Right cardiac atrium (tissue), 5 donors: ENCODE measurements at regions of chr7 and their contacts with region 1.

Region 1: DNA sequence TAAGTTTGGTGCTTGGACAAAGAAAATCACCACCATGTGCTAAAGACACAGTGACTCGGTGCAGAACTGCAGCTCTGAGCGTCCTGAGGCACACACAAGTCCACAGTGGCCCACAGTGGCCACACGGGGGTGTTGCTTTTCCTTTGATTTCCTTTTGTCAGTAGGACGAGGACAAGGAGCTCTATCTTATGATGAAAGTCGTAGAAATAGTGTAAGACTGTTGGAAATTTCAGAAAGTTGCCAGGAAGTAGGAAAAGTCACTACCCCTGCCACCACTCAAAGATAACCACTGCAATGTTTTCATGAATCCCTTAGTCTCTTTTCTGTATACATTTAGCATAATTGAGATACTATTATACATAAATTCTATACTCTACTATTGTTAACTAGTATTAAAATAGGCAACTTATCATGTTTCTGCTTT is 146.0 kb downstream of the TNS3 start:
- DNase-seq: peak; percentile 75 to 90 (median 81)
- ATAC-seq: peak; percentile 88 to 90
- H3K4me3 ChIP-seq: no peak overlapping the region
- H3K27ac ChIP-seq: no peak overlapping the region
- H3K4me1 ChIP-seq: no peaks in the 10 kb centered on the region
- H3K27me3 ChIP-seq: no peaks in the 10 kb centered on the region

Region 2: GRCh38 chr7:47266131-47266706 is 169.7 kb before region 1 on chr7:
- intact Hi-C with region 1: loop called in 2 of 4 experiments (anchors 5 kb)
- DNase-seq: peak; percentile 41 to 81 (median 71)
- ATAC-seq: peak; percentile 78 to 87
- H3K4me3 ChIP-seq: no peak overlapping the region
- H3K27ac ChIP-seq: peak overlapping the region; percentile 36
- H3K4me1 ChIP-seq: peaks cover 5% of the 10 kb centered on the region
- H3K27me3 ChIP-seq: no peaks in the 10 kb centered on the region

Region 3: GRCh38 chr7:47571331-47572093 is 135.6 kb after region 1 on chr7:
- intact Hi-C with region 1: loop called in 1 of 4 experiments (anchors 10 kb)
- DNase-seq: peak; percentile 89 to 95 (median 95)
- ATAC-seq: peak; percentile 82 to 83
- H3K4me3 ChIP-seq: no peak overlapping the region
- H3K27ac ChIP-seq: peak overlapping the region; percentile 90
- H3K4me1 ChIP-seq: peaks cover 20% of the 10 kb centered on the region
- H3K27me3 ChIP-seq: no peaks in the 10 kb centered on the region

Region 4: DNA sequence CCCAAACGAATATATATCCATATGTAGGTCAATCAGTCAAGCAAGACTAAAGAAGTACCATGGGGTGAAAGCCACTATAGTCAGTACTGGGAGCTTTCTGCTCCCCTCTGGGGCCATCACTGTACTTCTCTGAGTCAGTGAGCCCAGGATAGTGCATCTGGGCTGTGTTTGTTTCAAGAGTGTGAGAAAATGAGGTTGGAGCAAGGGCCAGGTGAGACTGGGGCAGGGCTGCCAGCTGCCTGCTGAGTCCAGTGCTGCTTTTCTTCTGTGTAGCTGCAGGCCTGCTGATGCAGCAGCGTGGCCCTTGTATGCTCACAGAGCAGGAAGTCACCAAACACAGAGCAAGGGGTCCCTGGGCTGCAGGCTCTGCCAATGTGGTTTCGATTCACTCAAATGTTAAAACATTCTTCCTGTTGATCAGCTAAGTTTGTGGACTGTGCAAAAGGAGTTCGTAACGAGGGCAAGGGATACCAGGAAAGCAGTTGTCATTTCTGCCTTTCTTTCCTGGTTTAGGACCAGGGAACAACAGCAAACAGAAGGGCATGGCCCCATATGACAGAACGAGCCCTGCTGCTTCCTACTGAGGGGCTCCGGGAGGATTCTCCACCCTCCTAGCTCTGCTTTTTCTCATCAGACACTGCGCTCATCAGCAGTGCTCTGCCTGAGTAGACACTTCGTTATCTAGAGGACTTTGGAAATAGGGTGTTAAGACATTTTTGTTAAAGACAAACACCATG is 211.4 kb after region 1 on chr7:
- intact Hi-C with region 1: no loop called
- DNase-seq: no peak
- ATAC-seq: peak; percentile 21 to 33
- H3K4me3 ChIP-seq: no peak overlapping the region
- H3K27ac ChIP-seq: no peak overlapping the region
- H3K4me1 ChIP-seq: peaks cover 3% of the 10 kb centered on the region
- H3K27me3 ChIP-seq: no peaks in the 10 kb centered on the region

Region 5: DNA sequence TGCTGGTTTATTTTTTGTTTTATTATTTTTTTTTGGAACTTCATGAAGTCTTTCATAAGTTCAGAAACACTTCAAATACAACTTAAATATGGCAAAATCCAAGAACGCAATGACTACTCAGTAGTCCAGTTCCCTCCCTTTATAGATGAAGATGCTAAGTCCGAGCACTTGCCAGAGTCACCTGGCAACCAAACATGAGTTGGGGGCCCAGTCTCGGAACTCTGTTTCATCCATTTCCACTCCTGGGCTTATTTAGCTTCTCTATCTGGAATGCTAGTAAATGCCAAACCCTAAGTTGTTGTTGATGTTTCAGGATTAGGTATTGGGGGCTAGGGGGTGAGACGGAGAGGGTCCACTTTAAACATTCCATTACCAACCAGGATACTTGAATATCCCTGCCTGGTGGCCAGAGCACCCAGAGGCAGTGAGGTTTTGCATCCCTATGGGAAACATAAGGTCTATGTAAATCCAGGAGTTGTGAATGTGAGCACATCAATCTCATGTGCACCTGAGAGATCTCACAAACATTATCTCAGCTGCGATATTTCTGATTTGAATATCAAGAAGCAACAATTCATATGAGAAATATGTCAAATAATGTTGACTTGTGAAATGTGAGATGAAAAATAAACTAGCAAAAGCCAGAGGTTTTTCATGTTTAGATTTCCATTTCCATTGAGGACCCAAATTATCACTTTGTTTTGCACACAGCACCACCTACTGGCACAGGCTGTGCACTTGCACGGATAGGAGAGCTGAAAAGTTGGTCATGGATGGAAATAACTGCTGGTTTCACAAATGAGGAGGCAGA is 383.1 kb after region 1 on chr7:
- intact Hi-C with region 1: loop called (anchors 5 to 10 kb)
- DNase-seq: peak; percentile 65 to 89 (median 75)
- ATAC-seq: peak; percentile 46 to 68
- H3K4me3 ChIP-seq: no peak overlapping the region
- H3K27ac ChIP-seq: no peak overlapping the region
- H3K4me1 ChIP-seq: peaks cover 4% of the 10 kb centered on the region
- H3K27me3 ChIP-seq: no peaks in the 10 kb centered on the region